H1 (cell line): ENCODE measurements at regions of chr11 and their contacts with region 1.

Region 1: GRCh38 chr11:47552566-47553416 is at the start of gene CELF1:
- DNase-seq: peak; percentile 80 to 91
- H3K4me3 ChIP-seq: peak within 1 kb of the TSS; percentile 68 to 96 (median 86)
- H3K27ac ChIP-seq: peak within 1 kb of the TSS; percentile 84
- H3K4me1 ChIP-seq: peaks cover 0 to 2% (median 0%) of the 10 kb centered on the region in 4 experiments; a peak in 1 of 7 replicates
- H3K27me3 ChIP-seq: no peaks in the 10 kb centered on the region
- CTCF ChIP-seq: peak; percentile 75 to 88 (median 84)
- EP300 ChIP-seq: peak in 1 of 2 experiments; percentile 38; a peak in 1 of 3 replicates
- POLR2A ChIP-seq: peak; percentile 42 to 71
- RAD21 ChIP-seq: peak; percentile 35 to 53; a peak in 3 of 4 replicates
- total RNA-seq, gene CELF1: 194 and 197 TPM in 2 replicates

Region 2: DNA sequence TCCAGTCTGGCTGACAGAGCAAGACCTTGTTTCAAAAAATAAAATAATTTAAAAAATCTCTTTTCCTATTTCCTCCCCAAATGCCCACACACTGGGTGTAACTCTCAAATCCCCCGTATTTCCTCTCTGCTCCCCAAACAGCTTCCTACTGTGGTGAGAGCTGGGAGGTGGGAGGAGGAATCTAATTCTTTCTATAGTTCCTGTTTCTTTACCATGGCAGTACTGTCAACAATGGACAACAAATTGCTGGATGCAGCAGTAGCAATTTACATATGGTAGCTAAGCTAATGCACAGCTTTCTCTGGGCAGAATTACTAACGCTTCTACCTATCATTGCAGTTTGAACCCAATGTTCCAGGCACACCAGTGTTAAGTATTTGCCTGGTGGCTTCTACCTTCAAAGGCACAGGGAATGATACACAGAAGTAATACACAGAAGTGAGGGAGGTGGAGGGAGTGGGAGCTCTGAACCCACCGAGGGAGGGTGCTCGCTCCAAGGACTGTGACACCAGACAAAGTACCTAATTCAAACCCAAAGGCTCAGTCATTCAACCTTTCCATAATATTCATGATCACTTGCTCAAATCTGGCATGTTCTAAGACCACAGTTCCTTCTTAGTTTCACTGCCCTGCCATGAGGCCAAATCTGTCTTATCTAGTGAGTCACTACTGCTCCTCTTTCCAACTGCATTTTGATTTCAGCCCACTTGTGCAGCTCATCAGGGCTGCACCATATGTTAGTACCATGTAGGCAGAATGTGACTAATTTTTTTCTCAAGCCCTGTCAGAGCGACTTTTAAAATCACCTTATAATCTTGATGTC is 37.8 kb before region 1 on chr11:
- CTCF ChIA-PET with region 1: interaction called, 4 read pairs
- POLR2A ChIA-PET with region 1: interaction called, 19 read pairs
- DNase-seq: no peak
- H3K4me3 ChIP-seq: no peak overlapping the region
- H3K27ac ChIP-seq: 0 out of 2 replicates have a peak overlapping the region, but pooled peaks have one; percentile 40
- H3K4me1 ChIP-seq: peaks cover 2 to 13% (median 11%) of the 10 kb centered on the region in 4 experiments; a peak in 5 of 7 replicates
- H3K27me3 ChIP-seq: no peaks in the 10 kb centered on the region
- CTCF ChIP-seq: no peak
- EP300 ChIP-seq: no peak
- POLR2A ChIP-seq: no peak
- RAD21 ChIP-seq: no peak

Region 3: GRCh38 chr11:47538741-47539574 is 13.8 kb before region 1 on chr11:
- CTCF ChIA-PET with region 1: interaction called, 25 read pairs
- POLR2A ChIA-PET with region 1: interaction called, 65 read pairs
- DNase-seq: no peak
- H3K4me3 ChIP-seq: no peak overlapping the region
- H3K27ac ChIP-seq: no peak overlapping the region
- H3K4me1 ChIP-seq: peaks cover 0 to 10% (median 4%) of the 10 kb centered on the region in 4 experiments; a peak in 5 of 7 replicates
- H3K27me3 ChIP-seq: no peaks in the 10 kb centered on the region
- CTCF ChIP-seq: no peak
- EP300 ChIP-seq: no peak
- POLR2A ChIP-seq: no peak
- RAD21 ChIP-seq: no peak

Region 4: DNA sequence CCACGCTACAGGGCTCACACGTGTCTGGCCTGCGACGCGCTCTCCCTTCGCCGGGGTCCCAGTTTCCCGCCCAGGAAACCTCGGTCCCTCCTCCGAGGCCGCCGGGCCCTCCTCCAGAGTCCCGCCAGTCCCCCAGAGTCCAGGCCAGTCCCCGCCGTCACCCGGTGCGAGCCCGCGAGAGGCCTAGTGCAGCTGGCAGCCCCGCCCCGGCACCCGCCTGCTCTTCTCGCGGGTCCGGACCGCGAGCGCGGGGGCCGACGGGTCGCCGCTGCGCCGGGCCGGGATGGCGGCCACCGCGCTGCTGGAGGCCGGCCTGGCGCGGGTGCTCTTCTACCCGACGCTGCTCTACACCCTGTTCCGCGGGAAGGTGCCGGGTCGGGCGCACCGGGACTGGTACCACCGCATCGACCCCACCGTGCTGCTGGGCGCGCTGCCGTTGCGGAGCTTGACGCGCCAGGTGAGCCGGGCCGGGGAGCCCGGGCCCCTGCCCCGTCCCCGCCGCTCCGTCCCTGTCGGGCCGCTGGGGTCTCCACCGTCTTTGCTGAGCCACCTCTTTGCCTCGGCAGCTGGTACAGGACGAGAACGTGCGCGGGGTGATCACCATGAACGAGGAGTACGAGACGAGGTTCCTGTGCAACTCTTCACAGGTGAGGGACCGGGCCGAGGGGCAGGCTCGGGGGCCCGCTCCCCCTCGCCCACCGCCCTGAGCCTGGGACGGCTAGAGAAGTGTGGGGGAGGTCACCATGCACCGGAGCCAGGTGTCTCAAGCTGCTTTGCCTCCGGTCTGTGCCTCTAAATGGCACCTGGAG is 12.8 kb after region 1 on chr11 and contains the start of gene PTPMT1:
- CTCF ChIA-PET with region 1: interaction called, 5 read pairs
- POLR2A ChIA-PET with region 1: interaction called, 50 read pairs
- DNase-seq: peak in 1 of 2 experiments; percentile 86
- H3K4me3 ChIP-seq: peak within 1 kb of the TSS; percentile 44 to 96 (median 95)
- H3K27ac ChIP-seq: peak within 1 kb of the TSS; percentile 53
- H3K4me1 ChIP-seq: peaks cover 0 to 3% (median 1%) of the 10 kb centered on the region in 4 experiments; a peak in 1 of 7 replicates
- H3K27me3 ChIP-seq: no peaks in the 10 kb centered on the region
- CTCF ChIP-seq: 0 out of 4 replicates have a peak, but pooled peaks of 1 of the 3 experiments have one; percentile 1
- EP300 ChIP-seq: peak in 1 of 2 experiments; percentile 9; a peak in 1 of 3 replicates
- POLR2A ChIP-seq: peak; percentile 48 to 82
- RAD21 ChIP-seq: no peak
- total RNA-seq, gene PTPMT1: 44.8 and 48.4 TPM in 2 replicates

Region 5: GRCh38 chr11:47572715-47573255 is 20.0 kb after region 1 on chr11:
- CTCF ChIA-PET with region 1: interaction called, 3 read pairs
- POLR2A ChIA-PET with region 1: interaction called, 13 read pairs
- DNase-seq: no peak
- H3K4me3 ChIP-seq: no peak overlapping the region
- H3K27ac ChIP-seq: no peak overlapping the region
- H3K4me1 ChIP-seq: peaks cover 0 to 2% (median under 1%) of the 10 kb centered on the region in 4 experiments; a peak in 2 of 7 replicates
- H3K27me3 ChIP-seq: no peaks in the 10 kb centered on the region
- CTCF ChIP-seq: no peak
- EP300 ChIP-seq: no peak
- POLR2A ChIP-seq: no peak
- RAD21 ChIP-seq: no peak

Region 6: GRCh38 chr11:47578524-47579460 is 26.0 kb after region 1 on chr11 and contains the starts of genes KBTBD4 and NDUFS3:
- CTCF ChIA-PET with region 1: interaction called, 3 read pairs
- POLR2A ChIA-PET with region 1: interaction called, 13 read pairs
- DNase-seq: peak; percentile 62 to 96
- H3K4me3 ChIP-seq: peak within 1 kb of the TSS; percentile 83 to 93 (median 90)
- H3K27ac ChIP-seq: peak within 1 kb of the TSS; percentile 97
- H3K4me1 ChIP-seq: peaks cover 0 to 5% (median 2%) of the 10 kb centered on the region in 4 experiments; a peak in 2 of 7 replicates
- H3K27me3 ChIP-seq: no peaks in the 10 kb centered on the region
- CTCF ChIP-seq: no peak
- EP300 ChIP-seq: peak; percentile 35 to 85
- POLR2A ChIP-seq: peak; percentile 38 to 91
- RAD21 ChIP-seq: peak in 1 of 2 experiments; percentile 8; a peak in 1 of 4 replicates
- total RNA-seq, gene KBTBD4: 12.0 and 14.0 TPM in 2 replicates
- total RNA-seq, gene NDUFS3: 135 and 136 TPM in 2 replicates